Activated CD4-positive, alpha-beta memory T cell treated with anti-CD3 and anti-CD28 coated beads for 36 hours (primary cell): ENCODE measurements at regions of chr14 and their contacts with region 1.

Region 1: GRCh38 chr14:34043627-34044372 is 92.9 kb upstream of the EGLN3 start:
- DNase-seq: peak; percentile 89
- H3K4me3 Mint-ChIP-seq: no peak overlapping the region
- H3K27ac Mint-ChIP-seq: peak overlapping the region; percentile 69
- H3K4me1 Mint-ChIP-seq: peaks cover 33% of the 10 kb centered on the region
- H3K27me3 Mint-ChIP-seq: no peaks in the 10 kb centered on the region

Region 2: GRCh38 chr14:33676135-33676566 is 367.6 kb before region 1 on chr14:
- CTCF ChIA-PET with region 1: no interaction called
- POLR2A ChIA-PET with region 1: no interaction called
- intact Hi-C with region 1: no loop called
- DNase-seq: no peak
- H3K4me3 Mint-ChIP-seq: no peak overlapping the region
- H3K27ac Mint-ChIP-seq: no peak overlapping the region
- H3K4me1 Mint-ChIP-seq: no peaks in the 10 kb centered on the region
- H3K27me3 Mint-ChIP-seq: no peaks in the 10 kb centered on the region

Region 3: GRCh38 chr14:33950320-33951182 is 93.2 kb before region 1 on chr14 and contains the start of gene EGLN3:
- CTCF ChIA-PET with region 1: no interaction called
- POLR2A ChIA-PET with region 1: no interaction called
- intact Hi-C with region 1: loop called (anchors 5 kb)
- DNase-seq: peak; percentile 73
- H3K4me3 Mint-ChIP-seq: peak within 1 kb of the TSS; percentile 76
- H3K27ac Mint-ChIP-seq: no peak within 1 kb of the TSS
- H3K4me1 Mint-ChIP-seq: peaks cover 17% of the 10 kb centered on the region
- H3K27me3 Mint-ChIP-seq: peaks cover 42% of the 10 kb centered on the region
- total RNA-seq, gene EGLN3: 1.2 to 1.9 TPM

Region 4: GRCh38 chr14:34018564-34019244 is 25.1 kb before region 1 on chr14:
- CTCF ChIA-PET with region 1: no interaction called
- POLR2A ChIA-PET with region 1: interaction called, 3 read pairs
- intact Hi-C with region 1: loop called (anchors 1 kb)
- DNase-seq: no peak
- H3K4me3 Mint-ChIP-seq: peak overlapping the region; percentile 61
- H3K27ac Mint-ChIP-seq: peak overlapping the region; percentile 71
- H3K4me1 Mint-ChIP-seq: peaks cover 10% of the 10 kb centered on the region
- H3K27me3 Mint-ChIP-seq: peaks cover 1% of the 10 kb centered on the region

Region 5: DNA sequence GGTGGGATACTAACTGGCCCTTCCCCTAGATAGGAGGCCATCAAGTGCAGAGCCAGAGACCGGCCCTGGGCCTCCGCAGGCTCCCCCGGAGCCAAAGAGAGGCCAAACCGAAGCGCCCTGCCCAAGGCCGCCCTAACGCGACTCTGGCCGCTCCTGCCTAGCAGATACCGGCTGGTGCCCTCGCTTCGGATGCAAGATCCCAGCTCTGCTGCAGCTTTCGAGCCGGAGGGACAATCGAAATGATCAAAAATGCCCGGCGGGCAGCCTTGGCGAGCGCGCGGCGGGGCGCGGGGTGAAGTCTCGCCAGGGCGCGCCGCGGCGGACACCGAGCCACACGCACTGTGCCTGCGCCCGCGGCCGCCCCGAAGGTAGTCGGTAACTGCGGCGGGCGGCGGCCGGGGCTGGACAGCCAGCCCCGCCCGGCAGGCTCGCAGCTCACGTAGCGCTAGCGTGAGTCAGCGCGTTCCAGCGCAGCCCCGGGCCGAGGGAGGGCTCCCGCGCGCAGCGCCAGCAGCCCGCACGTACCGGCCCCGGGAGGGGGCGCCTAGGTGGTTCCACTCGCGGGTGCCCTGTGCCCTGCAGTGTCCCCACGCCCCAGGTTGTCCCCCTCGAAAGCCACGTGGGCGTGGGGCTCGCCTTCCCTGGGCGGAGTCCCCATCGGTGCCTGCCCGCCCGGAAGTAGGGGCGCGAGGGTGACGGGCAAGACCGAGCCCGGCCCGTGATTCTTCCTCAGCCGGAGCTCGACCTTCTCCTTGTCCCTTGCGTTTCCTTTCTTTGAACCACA is 16.2 kb after region 1 on chr14:
- CTCF ChIA-PET with region 1: interaction called, 3 read pairs
- POLR2A ChIA-PET with region 1: interaction called, 4 read pairs
- intact Hi-C with region 1: loop called (anchors 1 kb)
- DNase-seq: peak; percentile 69
- H3K4me3 Mint-ChIP-seq: peak overlapping the region; percentile 76
- H3K27ac Mint-ChIP-seq: peak overlapping the region; percentile 34
- H3K4me1 Mint-ChIP-seq: peaks cover 8% of the 10 kb centered on the region
- H3K27me3 Mint-ChIP-seq: peaks cover 11% of the 10 kb centered on the region

Region 6: GRCh38 chr14:34078117-34078743 is 34.4 kb after region 1 on chr14:
- CTCF ChIA-PET with region 1: no interaction called
- POLR2A ChIA-PET with region 1: no interaction called
- intact Hi-C with region 1: no loop called
- DNase-seq: no peak
- H3K4me3 Mint-ChIP-seq: no peak overlapping the region
- H3K27ac Mint-ChIP-seq: no peak overlapping the region
- H3K4me1 Mint-ChIP-seq: no peaks in the 10 kb centered on the region
- H3K27me3 Mint-ChIP-seq: peaks cover 2% of the 10 kb centered on the region

Region 7: GRCh38 chr14:34211732-34212131 is 167.9 kb after region 1 on chr14:
- CTCF ChIA-PET with region 1: no interaction called
- POLR2A ChIA-PET with region 1: interaction called, 4 read pairs
- intact Hi-C with region 1: loop called (anchors 5 kb)
- DNase-seq: no peak
- H3K4me3 Mint-ChIP-seq: no peak overlapping the region
- H3K27ac Mint-ChIP-seq: no peak overlapping the region
- H3K4me1 Mint-ChIP-seq: peaks cover 19% of the 10 kb centered on the region
- H3K27me3 Mint-ChIP-seq: peaks cover 14% of the 10 kb centered on the region

Region 8: GRCh38 chr14:34539407-34540180 is 495.8 kb after region 1 on chr14 and contains the start of gene EAPP:
- CTCF ChIA-PET with region 1: no interaction called
- POLR2A ChIA-PET with region 1: no interaction called
- intact Hi-C with region 1: loop called (anchors 10 kb)
- DNase-seq: peak; percentile 98
- H3K4me3 Mint-ChIP-seq: peak within 1 kb of the TSS; percentile 99
- H3K27ac Mint-ChIP-seq: peak within 1 kb of the TSS; percentile 98
- H3K4me1 Mint-ChIP-seq: peaks cover 31% of the 10 kb centered on the region
- H3K27me3 Mint-ChIP-seq: no peaks in the 10 kb centered on the region
- total RNA-seq, gene EAPP: 37.5 to 40.2 TPM

Region 9: GRCh38 chr14:34643361-34643760 is 599.6 kb after region 1 on chr14:
- CTCF ChIA-PET with region 1: no interaction called
- POLR2A ChIA-PET with region 1: no interaction called
- intact Hi-C with region 1: loop called (anchors 5 kb)
- DNase-seq: no peak
- H3K4me3 Mint-ChIP-seq: no peak overlapping the region
- H3K27ac Mint-ChIP-seq: no peak overlapping the region
- H3K4me1 Mint-ChIP-seq: no peaks in the 10 kb centered on the region
- H3K27me3 Mint-ChIP-seq: no peaks in the 10 kb centered on the region